Activated CD4-positive, alpha-beta T cell treated with anti-CD3 and anti-CD28 coated beads, Interleukin-2, amount 10 ng/mL, durations not matched to agents 7 days and 5 days (primary cell): ENCODE measurements at regions of chr20 and their contacts with region 1.

Region 1: DNA sequence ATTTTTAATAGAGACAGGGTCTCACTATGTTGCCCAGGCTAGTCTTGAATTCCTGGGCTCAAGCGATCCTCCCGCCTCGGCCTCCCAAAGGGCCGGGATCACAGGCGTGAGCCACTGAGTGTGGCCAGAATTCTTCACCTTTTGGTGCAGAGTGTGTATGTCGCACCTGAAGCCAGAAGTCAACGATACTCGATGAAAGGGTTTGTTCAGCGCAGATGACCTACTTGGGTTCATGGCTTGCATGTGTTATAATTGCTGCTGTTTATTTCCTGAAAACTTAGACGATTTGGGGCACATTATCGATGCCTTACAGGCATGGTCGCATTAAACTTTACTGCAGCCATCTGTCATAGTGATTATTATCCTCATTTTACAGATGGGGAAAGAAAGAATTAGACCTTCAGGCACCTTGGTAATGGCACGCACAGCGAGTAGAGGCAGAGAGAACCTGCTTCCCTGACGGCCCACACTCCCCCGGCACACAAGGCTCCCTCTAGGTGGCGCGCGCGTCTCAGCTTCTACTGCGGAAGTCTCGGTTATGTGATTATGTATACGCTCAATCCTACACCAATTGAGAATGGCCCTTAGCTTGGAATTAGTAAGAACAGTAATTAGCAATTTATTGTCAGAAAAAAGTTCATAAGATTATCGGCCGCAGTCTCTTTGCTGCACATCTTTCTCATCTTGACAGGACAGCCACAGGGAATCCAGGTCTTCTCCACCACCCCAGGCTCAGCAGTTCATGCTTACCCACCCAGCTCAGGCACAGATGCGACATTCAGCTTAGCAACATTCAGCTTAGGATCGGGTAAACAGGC is 212.8 kb upstream of the PROKR2 start:
- DNase-seq: peak; percentile 89
- H3K4me3 Mint-ChIP-seq: peak overlapping the region; percentile 36
- H3K27ac Mint-ChIP-seq: peak overlapping the region; percentile 25
- H3K4me1 Mint-ChIP-seq: peaks cover 24% of the 10 kb centered on the region
- H3K27me3 Mint-ChIP-seq: no peaks in the 10 kb centered on the region

Region 2: DNA sequence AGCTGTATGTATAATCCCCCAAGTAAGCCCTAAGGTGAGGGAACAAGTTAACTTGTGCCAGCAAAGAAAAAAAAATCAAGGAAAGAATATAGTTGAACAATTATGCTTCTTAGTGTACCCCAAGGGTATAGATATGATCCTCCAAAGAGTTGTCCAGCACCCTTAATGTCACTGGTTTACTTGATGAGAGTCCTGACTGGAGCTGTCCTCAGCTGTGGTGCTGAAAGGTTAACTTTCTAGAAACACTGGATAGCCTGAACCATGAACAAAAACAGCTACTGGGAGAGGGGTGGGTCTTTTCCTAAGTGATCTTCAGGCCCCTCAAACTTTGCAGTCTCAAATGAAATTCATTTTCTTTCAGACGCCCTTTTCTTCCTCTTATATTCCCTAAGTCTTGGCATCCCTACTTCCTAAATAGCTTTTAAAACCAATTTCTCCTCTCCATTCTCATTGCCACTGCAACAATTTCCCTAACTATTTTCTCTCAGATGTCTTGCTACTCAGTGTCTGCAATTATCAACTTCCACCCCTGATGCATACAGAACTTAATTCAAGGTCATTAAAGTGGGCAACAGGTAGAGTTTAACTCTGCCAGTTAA is 129.3 kb before region 1 on chr20:
- CTCF ChIA-PET with region 1: no interaction called
- POLR2A ChIA-PET with region 1: no interaction called
- DNase-seq: peak; percentile 16
- H3K4me3 Mint-ChIP-seq: no peak overlapping the region
- H3K27ac Mint-ChIP-seq: no peak overlapping the region
- H3K4me1 Mint-ChIP-seq: no peaks in the 10 kb centered on the region
- H3K27me3 Mint-ChIP-seq: no peaks in the 10 kb centered on the region

Region 3: DNA sequence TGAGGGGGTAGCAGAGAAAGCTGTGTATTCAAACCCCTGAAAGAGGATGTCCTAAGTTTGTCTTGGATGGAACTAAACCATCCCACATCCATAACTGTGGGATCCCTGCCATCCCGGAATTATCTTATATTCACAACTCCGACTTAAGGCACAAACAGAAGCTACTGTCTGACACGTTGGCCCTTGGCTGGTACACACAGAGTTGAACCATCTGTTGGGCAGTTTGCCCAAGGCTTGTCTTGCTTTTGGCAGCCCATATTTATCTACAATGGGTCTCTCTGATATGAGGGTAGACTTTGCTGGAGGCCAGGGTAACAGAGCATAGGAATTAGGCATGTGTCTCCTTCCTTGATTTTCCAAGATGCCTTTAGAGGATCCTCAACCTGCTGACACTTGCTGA is 96.2 kb before region 1 on chr20:
- CTCF ChIA-PET with region 1: no interaction called
- POLR2A ChIA-PET with region 1: no interaction called
- DNase-seq: no peak
- H3K4me3 Mint-ChIP-seq: no peak overlapping the region
- H3K27ac Mint-ChIP-seq: no peak overlapping the region
- H3K4me1 Mint-ChIP-seq: no peaks in the 10 kb centered on the region
- H3K27me3 Mint-ChIP-seq: peaks cover 15% of the 10 kb centered on the region

Region 4: DNA sequence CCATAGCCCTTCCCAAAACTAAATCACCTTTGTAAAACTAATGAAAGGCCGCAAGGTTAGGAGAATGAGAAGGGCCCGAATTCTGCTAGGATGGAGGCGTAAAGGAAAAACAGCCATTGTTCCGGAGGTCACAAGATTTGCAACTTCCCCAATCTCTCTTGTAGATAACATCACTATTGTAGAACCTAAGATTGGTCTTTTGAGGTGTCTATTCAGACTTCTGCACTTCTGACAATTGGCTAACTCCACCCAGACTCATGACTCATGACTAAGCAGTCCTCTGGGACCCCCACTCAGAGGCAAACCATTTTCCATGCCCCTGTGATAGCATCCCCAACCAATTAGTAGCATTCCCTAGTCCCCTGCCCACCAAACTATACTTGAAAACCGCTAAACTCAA is 10.2 kb after region 1 on chr20:
- CTCF ChIA-PET with region 1: interaction called, 13 read pairs
- POLR2A ChIA-PET with region 1: no interaction called
- DNase-seq: no peak
- H3K4me3 Mint-ChIP-seq: no peak overlapping the region
- H3K27ac Mint-ChIP-seq: no peak overlapping the region
- H3K4me1 Mint-ChIP-seq: peaks cover 2% of the 10 kb centered on the region
- H3K27me3 Mint-ChIP-seq: no peaks in the 10 kb centered on the region

Region 5: DNA sequence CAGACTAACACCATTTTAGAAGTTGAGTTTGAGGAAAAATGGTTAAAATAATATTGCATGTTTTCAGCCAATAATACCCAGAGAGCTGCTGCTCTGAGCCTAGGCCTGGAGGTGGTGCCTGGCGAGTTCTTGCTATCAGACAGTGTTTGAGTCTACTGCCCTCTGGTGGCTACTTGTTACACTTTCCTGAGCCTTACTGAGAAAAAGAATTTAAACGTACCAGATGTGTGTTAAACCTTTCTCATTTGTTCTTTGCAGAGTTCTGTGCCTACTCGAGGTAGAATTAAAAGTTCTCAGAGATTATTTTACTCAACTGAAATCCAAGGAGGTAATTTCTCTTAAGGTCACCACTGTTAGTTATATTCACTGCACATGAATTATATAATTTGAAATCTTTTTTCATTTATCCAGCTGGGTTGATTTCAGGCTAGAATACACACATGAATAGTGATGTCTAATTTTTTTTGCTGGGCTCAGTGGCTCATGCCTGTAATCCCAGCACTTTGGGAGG is 258.9 kb after region 1 on chr20:
- CTCF ChIA-PET with region 1: interaction called, 29 read pairs
- POLR2A ChIA-PET with region 1: no interaction called
- DNase-seq: peak; percentile 92
- H3K4me3 Mint-ChIP-seq: no peak overlapping the region
- H3K27ac Mint-ChIP-seq: peak overlapping the region; percentile 62
- H3K4me1 Mint-ChIP-seq: peaks cover 6% of the 10 kb centered on the region
- H3K27me3 Mint-ChIP-seq: no peaks in the 10 kb centered on the region